A673 (cell line): ENCODE measurements at regions of chr2 and their contacts with region 1.

Region 1: GRCh38 chr2:160445673-160446072 is 47.9 kb downstream of the RBMS1 start:
- DNase-seq: no peak
- H3K4me3 ChIP-seq: no peak overlapping the region
- H3K27ac ChIP-seq: no peak overlapping the region
- H3K4me1 ChIP-seq: peaks cover 4% of the 10 kb centered on the region
- H3K27me3 ChIP-seq: no peaks in the 10 kb centered on the region
- CTCF ChIP-seq: no peak

Region 2: DNA sequence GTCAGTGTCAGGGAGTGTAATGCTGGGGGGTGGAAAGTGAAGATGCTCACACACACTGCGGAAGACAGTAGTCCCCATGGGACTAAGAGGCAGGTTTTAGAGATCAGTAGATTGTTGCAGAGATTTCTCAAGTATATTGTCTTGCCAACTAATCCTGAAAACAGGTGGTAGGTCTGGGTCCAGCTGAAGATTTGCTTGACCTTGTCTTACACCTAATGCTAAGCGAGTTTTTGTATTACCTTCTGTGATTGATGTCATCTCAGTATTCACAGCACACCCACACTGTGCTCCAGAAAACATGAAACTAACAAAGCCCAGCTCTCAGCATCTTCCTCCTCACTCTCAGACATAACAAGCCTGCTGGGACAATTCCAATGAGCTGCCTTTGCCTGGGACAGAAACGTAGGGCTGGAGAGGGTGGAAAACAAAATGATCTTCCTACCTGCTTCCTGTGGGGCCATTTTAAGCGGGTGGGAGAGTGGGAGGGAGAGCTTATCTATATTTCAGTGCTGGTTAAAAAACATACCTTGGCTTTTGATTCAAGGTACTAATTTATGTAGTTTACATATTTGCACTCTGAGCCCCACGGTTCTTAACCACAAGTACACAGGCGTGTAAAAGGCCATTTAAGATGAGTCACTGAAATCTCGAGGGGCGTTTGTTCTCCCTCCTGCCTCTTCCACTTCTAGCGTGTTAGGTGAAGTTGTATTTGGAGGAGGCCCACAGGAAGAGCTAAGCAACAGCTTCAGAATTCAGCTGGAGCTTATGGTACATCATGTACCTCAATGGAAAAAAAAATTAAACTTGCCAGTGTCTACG is 71.1 kb after region 1 on chr2:
- CTCF ChIA-PET with region 1: no interaction called
- POLR2A ChIA-PET with region 1: interaction called, 10 read pairs
- intact Hi-C with region 1: no loop called
- DNase-seq: peak; percentile 50
- H3K4me3 ChIP-seq: no peak overlapping the region
- H3K27ac ChIP-seq: no peak overlapping the region
- H3K4me1 ChIP-seq: peaks cover 4% of the 10 kb centered on the region
- H3K27me3 ChIP-seq: no peaks in the 10 kb centered on the region
- CTCF ChIP-seq: no peak

Region 3: DNA sequence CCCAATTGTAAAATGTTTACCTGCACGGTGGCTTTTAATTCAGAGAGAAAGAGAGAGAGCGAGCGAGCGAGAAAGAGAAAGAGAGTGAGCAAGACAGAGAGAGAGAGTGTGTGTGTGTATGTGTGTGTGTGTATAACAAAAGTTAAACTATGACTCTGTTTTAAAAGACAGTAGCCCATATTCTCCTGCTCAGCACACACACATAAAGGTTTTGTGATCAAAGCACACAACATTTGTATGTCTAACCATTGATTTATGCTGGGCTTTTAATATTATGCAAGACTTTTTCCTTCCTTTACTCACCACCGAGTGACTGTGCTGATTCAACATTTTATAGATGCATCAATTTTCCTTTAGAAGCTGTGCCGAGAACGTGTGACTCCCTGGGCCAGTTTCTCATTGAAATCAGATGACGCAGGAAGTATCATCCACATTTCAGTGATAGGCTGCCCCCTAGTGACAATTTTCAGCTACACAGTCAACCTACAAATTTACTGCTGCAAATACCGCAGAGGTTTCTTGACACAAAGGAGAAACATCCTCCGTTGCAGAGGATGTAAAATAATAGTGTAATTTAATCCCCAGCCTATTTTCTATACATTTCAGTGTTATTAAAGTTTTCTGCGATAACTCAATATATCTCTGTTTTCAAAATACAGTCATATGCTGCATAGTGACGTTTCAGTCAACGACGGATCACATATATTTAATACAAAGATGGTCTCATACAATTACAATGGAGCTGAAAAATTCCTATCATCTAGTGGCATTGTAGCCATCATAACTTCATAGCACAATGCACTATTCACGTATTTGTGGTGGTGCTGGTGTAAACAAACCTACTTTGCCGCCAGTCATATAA is 548.7 kb after region 1 on chr2:
- CTCF ChIA-PET with region 1: no interaction called
- POLR2A ChIA-PET with region 1: no interaction called
- intact Hi-C with region 1: no loop called
- DNase-seq: peak; percentile 89
- H3K4me3 ChIP-seq: no peak overlapping the region
- H3K27ac ChIP-seq: no peak overlapping the region
- H3K4me1 ChIP-seq: peaks cover 7% of the 10 kb centered on the region
- H3K27me3 ChIP-seq: no peaks in the 10 kb centered on the region
- CTCF ChIP-seq: peak; percentile 84